ENCODE measurements at regions of chr5 and their contacts with region 1.

Region 1: DNA sequence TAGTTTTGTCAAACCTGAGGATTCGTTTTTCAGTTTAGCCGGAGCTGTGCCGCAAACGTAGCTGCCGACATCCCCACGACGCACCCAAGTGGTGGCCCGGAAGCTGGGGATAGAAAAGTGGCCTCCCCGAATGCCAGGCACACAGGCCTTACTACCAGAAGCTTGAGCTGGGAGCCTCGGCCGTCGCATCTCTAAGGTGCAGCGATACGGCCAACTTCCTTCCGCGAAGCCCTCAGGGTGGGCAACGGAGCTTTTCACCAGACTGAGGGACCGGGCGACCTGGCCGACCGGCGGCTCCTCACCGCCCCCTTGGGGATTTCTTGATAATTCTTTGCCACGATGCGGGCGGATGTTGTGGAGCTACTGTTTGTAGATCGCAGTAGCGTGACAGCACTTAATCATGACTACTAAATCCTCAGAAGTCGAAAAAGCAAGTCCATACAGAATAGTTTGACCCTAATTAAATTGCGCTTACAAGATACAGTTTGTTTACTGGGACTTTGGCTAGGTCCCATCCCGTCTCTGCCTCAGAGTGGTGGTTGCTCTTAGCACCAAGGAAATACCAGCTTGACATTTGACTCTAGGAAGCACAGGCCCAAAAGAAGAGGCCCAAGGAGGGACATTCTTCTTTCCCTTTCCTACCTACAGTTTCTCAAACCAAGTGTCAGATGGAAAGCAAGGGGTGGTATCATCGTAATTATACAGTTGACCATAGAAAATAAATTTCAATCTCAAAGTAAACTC is 613 bp upstream of the TMEM267 start:
- DNase-seq: peak; percentile 91
- H3K4me3 Mint-ChIP-seq: peak overlapping the region; percentile 95
- H3K27ac Mint-ChIP-seq: peak overlapping the region; percentile 99
- H3K4me1 Mint-ChIP-seq: peaks cover 21% of the 10 kb centered on the region
- H3K27me3 Mint-ChIP-seq: no peaks in the 10 kb centered on the region
- CTCF ChIP-seq: peak; percentile 54

Region 2: GRCh38 chr5:43073597-43074546 is 410.4 kb before region 1 on chr5:
- CTCF ChIA-PET with region 1: no interaction called
- intact Hi-C with region 1: no loop called
- DNase-seq: peak; percentile 36
- H3K4me3 Mint-ChIP-seq: no peak overlapping the region
- H3K27ac Mint-ChIP-seq: peak overlapping the region; percentile 10
- H3K4me1 Mint-ChIP-seq: peaks cover 34% of the 10 kb centered on the region
- H3K27me3 Mint-ChIP-seq: no peaks in the 10 kb centered on the region
- CTCF ChIP-seq: peak; percentile 51

Region 3: DNA sequence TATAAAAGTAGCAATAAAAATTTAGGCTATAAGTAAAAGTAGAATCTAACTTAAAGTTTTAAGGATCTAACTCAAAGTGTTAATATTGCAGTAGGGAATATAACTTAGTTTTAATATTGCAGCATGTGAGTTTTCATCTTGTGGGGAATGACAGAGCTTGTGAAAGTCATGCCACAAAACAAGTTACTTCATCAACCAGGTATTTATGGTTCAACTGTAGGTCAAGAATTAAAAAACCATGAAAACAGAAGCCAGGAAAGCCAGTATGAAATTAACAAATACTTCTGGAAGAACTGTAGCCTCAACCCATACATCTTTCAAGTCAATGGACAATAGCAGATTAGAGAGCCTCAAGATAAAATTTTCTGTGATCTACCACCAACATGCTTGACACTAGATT is 190.1 kb before region 1 on chr5:
- CTCF ChIA-PET with region 1: no interaction called
- intact Hi-C with region 1: loop called (anchors 5 kb)
- DNase-seq: no peak
- H3K4me3 Mint-ChIP-seq: no peak overlapping the region
- H3K27ac Mint-ChIP-seq: no peak overlapping the region
- H3K4me1 Mint-ChIP-seq: peaks cover 28% of the 10 kb centered on the region
- H3K27me3 Mint-ChIP-seq: no peaks in the 10 kb centered on the region
- CTCF ChIP-seq: no peak

Region 4: GRCh38 chr5:43389679-43390329 is 94.5 kb before region 1 on chr5:
- CTCF ChIA-PET with region 1: interaction called, 23 read pairs
- intact Hi-C with region 1: no loop called
- DNase-seq: peak; percentile 75
- H3K4me3 Mint-ChIP-seq: no peak overlapping the region
- H3K27ac Mint-ChIP-seq: no peak overlapping the region
- H3K4me1 Mint-ChIP-seq: no peaks in the 10 kb centered on the region
- H3K27me3 Mint-ChIP-seq: no peaks in the 10 kb centered on the region
- CTCF ChIP-seq: peak; percentile 80

Region 5: GRCh38 chr5:43409809-43410271 is 74.4 kb before region 1 on chr5:
- CTCF ChIA-PET with region 1: interaction called, 11 read pairs
- intact Hi-C with region 1: no loop called
- DNase-seq: no peak
- H3K4me3 Mint-ChIP-seq: no peak overlapping the region
- H3K27ac Mint-ChIP-seq: peak overlapping the region; percentile 13
- H3K4me1 Mint-ChIP-seq: peaks cover 34% of the 10 kb centered on the region
- H3K27me3 Mint-ChIP-seq: no peaks in the 10 kb centered on the region
- CTCF ChIP-seq: no peak

Region 6: DNA sequence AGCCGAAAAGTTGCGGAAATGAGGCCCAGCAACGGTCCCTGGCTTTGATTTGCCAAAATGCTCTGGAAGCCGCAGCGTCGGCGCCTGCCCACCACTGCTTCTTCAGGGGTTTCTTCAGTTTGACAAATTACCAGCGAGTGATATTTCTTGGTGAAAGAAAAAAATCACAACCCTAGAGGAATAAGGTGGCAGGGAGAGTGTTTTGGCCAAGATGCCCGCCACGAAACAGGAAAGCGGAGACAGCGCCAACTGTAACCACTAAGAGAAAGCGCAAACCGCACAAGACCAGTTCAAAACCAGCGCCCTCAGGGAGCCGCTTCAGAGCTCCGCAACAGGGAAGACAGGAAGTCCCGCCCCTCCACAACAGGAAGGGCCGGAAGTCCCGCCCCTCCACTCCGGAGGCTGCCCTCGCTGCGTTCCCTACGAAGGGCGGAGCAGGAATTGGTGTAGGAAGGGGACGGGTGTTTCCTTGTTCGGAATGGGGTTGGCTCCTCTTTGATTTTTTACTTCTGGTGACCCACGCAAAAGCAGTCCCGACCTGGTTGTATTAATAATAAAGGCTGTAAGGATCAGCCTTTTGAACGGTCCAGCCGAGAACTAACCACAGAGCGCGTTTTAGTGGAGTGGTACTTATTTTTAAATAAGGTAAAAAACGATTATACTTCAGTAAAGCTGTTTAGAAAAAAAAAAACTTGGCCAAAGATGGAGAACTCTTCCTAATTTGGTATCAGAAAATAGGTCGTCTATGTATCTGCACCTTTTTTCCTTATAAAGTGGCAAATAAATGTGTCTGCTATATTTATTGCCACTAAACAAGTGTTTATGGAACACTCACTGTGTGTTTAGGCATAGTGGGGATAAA is 30.8 kb after region 1 on chr5 and contains the start of gene C5orf34:
- CTCF ChIA-PET with region 1: interaction called, 15 read pairs
- intact Hi-C with region 1: no loop called
- DNase-seq: peak; percentile 97
- H3K4me3 Mint-ChIP-seq: peak within 1 kb of the TSS; percentile 63
- H3K27ac Mint-ChIP-seq: peak within 1 kb of the TSS; percentile 34
- H3K4me1 Mint-ChIP-seq: peaks cover 26% of the 10 kb centered on the region
- H3K27me3 Mint-ChIP-seq: no peaks in the 10 kb centered on the region
- CTCF ChIP-seq: no peak
- total RNA-seq, gene C5orf34: 6.9 and 7.4 TPM in 2 replicates

Region 7: DNA sequence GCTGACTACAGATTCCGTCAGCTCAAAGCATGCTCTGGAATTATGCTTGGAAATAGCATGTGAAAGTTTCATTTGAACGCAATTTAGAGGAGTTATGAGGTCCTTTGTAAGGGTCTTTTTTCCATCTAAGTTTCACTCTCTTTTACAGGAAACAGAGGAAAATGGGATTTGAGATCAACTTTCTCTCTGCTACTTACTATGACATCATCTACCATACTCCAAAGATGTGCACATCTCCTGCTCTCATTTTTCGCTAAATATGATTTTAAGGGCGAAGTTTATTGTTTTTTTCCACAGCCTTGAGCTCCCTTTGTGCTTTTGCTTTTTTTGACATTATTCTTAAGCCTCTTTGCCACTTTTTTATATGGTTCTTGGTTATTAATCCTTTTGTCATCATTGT is 244.3 kb after region 1 on chr5:
- CTCF ChIA-PET with region 1: no interaction called
- intact Hi-C with region 1: no loop called
- DNase-seq: no peak
- H3K4me3 Mint-ChIP-seq: no peak overlapping the region
- H3K27ac Mint-ChIP-seq: no peak overlapping the region
- H3K4me1 Mint-ChIP-seq: peaks cover 15% of the 10 kb centered on the region
- H3K27me3 Mint-ChIP-seq: no peaks in the 10 kb centered on the region
- CTCF ChIP-seq: no peak